PC-3 (cell line): ENCODE measurements at regions of chr9 and their contacts with region 1.

Region 1: GRCh38 chr9:120668399-120668798 is 45.9 kb downstream of the MEGF9 start:
- DNase-seq: no peak
- ATAC-seq: no peak
- H3K4me3 ChIP-seq: no peak overlapping the region
- H3K27ac ChIP-seq: no peak overlapping the region
- H3K4me1 ChIP-seq: no peaks in the 10 kb centered on the region
- H3K27me3 ChIP-seq: no peaks in the 10 kb centered on the region
- CTCF ChIP-seq: no peak

Region 2: DNA sequence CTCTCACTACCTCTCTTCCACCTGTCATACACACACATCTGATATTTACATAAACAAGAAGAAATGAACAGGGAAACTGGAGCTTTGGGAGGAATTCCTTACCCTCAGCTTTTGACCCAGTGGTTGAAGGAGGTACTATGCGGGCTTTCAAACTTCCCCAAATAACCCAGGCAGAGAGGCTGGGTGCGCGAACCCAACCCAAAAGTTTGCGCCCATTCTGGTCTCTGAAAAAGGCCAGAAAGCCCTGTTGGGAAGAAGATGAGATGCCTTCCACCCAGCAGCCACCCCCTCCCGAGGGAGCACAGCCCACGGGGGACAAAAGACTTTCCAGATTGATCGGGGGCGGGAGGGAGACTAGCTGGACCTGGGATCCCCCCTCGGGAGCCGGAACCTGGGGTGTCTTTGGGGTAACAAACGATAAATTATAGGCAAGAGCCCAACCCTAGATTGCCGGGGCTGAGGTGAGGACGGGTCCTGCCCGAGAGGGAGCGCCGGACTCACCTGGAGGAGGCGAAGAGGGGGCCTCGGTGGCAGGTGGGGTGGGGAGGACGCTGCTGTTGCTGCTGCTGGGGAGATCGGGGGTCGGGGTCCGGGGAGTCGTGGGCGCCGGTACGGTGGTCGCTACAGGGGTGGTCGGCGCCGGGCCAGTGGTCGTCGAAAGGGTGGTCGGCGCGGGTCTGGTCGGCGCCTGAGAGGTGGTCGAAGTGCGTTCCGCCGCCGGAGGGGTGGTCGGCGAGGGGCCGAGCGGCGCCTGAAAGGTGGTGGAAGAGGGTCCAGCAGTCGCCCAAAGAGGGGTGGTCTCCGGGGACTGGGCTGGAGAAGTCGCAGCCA is 45.1 kb after region 1 on chr9:
- CTCF ChIA-PET with region 1: no interaction called
- POLR2A ChIA-PET with region 1: interaction called, 15 read pairs
- intact Hi-C with region 1: no loop called
- DNase-seq: peak; percentile 29
- ATAC-seq: no peak
- H3K4me3 ChIP-seq: peak overlapping the region; percentile 83
- H3K27ac ChIP-seq: no peak overlapping the region
- H3K4me1 ChIP-seq: peaks cover 41% of the 10 kb centered on the region
- H3K27me3 ChIP-seq: no peaks in the 10 kb centered on the region
- CTCF ChIP-seq: no peak

Region 3: DNA sequence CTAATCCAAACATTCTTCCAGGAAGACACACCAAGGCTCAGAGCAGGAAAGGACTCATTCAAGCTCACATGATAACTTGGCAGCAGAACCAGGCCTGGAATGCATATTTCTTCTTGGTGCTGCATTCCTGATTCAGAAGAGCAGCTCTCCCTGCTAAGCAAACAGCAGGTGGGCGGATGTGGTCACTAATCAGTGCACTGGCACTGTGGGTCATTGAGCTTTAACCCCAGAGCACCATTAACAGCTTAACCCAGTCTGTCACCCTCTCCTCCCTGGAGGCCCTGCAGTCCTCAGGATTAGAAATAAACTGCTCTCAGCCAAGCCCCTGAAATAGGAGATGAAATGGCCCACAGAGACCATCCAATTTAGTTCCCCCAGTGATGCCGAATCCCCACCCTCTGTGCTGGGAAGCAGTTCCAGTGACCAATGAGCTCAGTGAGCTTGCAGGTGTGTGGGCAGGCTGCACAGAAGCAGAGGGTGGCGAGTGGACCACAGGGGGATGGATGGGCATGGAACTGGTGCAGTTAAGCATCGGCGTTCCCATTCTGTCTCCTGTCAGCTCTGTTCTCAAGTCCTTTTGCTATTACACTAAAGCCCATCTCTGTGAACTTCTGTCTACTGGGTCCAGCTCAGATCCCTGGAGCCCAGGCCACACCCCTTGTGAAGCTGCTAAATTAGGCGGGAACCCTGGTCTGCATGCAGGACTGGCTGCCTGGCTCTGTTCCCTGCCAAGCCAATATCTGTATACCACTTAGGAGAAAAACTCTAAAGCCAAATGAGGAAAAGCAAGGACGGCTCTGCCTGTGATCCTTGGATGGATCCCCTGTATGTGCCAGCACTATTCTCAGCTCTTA is 62.5 kb after region 1 on chr9:
- CTCF ChIA-PET with region 1: no interaction called
- POLR2A ChIA-PET with region 1: interaction called, 12 read pairs
- intact Hi-C with region 1: no loop called
- DNase-seq: peak; percentile 95
- ATAC-seq: peak; percentile 91
- H3K4me3 ChIP-seq: no peak overlapping the region
- H3K27ac ChIP-seq: no peak overlapping the region
- H3K4me1 ChIP-seq: peaks cover 25% of the 10 kb centered on the region
- H3K27me3 ChIP-seq: no peaks in the 10 kb centered on the region
- CTCF ChIP-seq: no peak

Region 4: DNA sequence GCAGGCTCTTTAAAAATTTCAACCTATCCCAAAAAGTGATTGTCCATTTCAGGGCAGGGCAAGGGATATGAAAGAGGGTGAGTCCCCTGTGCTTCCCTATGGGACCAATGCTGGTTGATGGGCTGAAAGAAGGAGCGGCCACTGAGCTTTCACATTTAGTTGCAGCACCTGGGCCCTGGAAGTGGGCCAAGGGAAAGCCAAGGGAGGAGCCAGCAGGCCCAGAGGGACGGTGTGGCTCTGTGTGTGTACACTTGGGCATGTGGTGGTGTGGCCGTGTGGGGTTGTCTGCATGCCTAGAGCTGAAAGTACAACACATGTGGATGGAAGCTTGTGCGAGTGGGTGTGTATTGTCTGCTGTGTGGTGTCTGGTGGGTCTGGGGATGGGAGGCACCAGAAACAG is 188.3 kb after region 1 on chr9:
- CTCF ChIA-PET with region 1: no interaction called
- POLR2A ChIA-PET with region 1: no interaction called
- intact Hi-C with region 1: no loop called
- DNase-seq: no peak
- ATAC-seq: no peak
- H3K4me3 ChIP-seq: no peak overlapping the region
- H3K27ac ChIP-seq: no peak overlapping the region
- H3K4me1 ChIP-seq: no peaks in the 10 kb centered on the region
- H3K27me3 ChIP-seq: no peaks in the 10 kb centered on the region
- CTCF ChIP-seq: no peak